Activated CD4-positive, alpha-beta T cell treated with anti-CD3 and anti-CD28 coated beads for 36 hours (primary cell): ENCODE measurements at regions of chrX and their contacts with region 1.

Region 1: GRCh38 chrX:46796574-46797191 is 37.8 kb upstream of the SLC9A7 start:
- DNase-seq: peak; percentile 84
- ATAC-seq: peak; percentile 63
- H3K4me3 Mint-ChIP-seq: no peak overlapping the region
- H3K27ac Mint-ChIP-seq: no peak overlapping the region
- H3K4me1 Mint-ChIP-seq: peaks cover 19% of the 10 kb centered on the region
- H3K27me3 Mint-ChIP-seq: peaks cover 2% of the 10 kb centered on the region

Region 2: GRCh38 chrX:45781901-45782553 is 1014.7 kb before region 1 on chrX:
- CTCF ChIA-PET with region 1: no interaction called
- POLR2A ChIA-PET with region 1: no interaction called
- intact Hi-C with region 1: no loop called
- DNase-seq: no peak
- ATAC-seq: peak; percentile 75
- H3K4me3 Mint-ChIP-seq: no peak overlapping the region
- H3K27ac Mint-ChIP-seq: no peak overlapping the region
- H3K4me1 Mint-ChIP-seq: peaks cover 73% of the 10 kb centered on the region
- H3K27me3 Mint-ChIP-seq: no peaks in the 10 kb centered on the region

Region 3: GRCh38 chrX:46381630-46382029 is 415.1 kb before region 1 on chrX:
- CTCF ChIA-PET with region 1: no interaction called
- POLR2A ChIA-PET with region 1: no interaction called
- intact Hi-C with region 1: loop called (anchors 2 to 10 kb)
- DNase-seq: peak; percentile 56
- ATAC-seq: peak; percentile 61
- H3K4me3 Mint-ChIP-seq: no peak overlapping the region
- H3K27ac Mint-ChIP-seq: no peak overlapping the region
- H3K4me1 Mint-ChIP-seq: no peaks in the 10 kb centered on the region
- H3K27me3 Mint-ChIP-seq: no peaks in the 10 kb centered on the region

Region 4: GRCh38 chrX:46545111-46546005 is 251.3 kb before region 1 on chrX and contains the start of gene ZNF674:
- CTCF ChIA-PET with region 1: no interaction called
- POLR2A ChIA-PET with region 1: no interaction called
- intact Hi-C with region 1: loop called in 1 of 2 experiments (anchors 10 kb)
- DNase-seq: peak; percentile 96
- ATAC-seq: peak; percentile 88
- H3K4me3 Mint-ChIP-seq: peak within 1 kb of the TSS; percentile 88
- H3K27ac Mint-ChIP-seq: peak within 1 kb of the TSS; percentile 94
- H3K4me1 Mint-ChIP-seq: peaks cover 32% of the 10 kb centered on the region
- H3K27me3 Mint-ChIP-seq: no peaks in the 10 kb centered on the region
- total RNA-seq, gene ZNF674: 2.0 to 2.6 TPM

Region 5: DNA sequence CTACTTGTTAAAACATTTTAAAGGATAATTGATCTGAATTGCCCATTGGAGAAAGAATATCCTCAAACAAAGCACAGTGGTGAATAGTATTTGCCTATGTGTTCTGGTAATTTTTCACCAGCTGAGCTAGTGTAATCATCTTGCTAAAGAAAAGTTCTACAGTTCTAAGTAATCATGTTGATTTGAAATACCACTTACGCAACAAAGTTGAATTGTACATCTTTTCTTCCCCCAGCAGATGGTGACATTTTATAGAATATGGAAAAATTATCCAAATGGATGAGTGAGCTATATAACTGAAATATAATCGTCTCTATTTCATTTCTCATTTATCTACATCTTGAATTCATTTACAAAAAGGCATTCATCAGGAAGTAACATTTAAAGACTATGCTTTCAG is 241.7 kb before region 1 on chrX:
- CTCF ChIA-PET with region 1: interaction called, 3 read pairs
- POLR2A ChIA-PET with region 1: no interaction called
- intact Hi-C with region 1: loop called in 1 of 2 experiments (anchors 1 kb)
- DNase-seq: no peak
- ATAC-seq: no peak
- H3K4me3 Mint-ChIP-seq: no peak overlapping the region
- H3K27ac Mint-ChIP-seq: no peak overlapping the region
- H3K4me1 Mint-ChIP-seq: no peaks in the 10 kb centered on the region
- H3K27me3 Mint-ChIP-seq: no peaks in the 10 kb centered on the region

Region 6: GRCh38 chrX:46642145-46642544 is 154.5 kb before region 1 on chrX:
- CTCF ChIA-PET with region 1: no interaction called
- POLR2A ChIA-PET with region 1: no interaction called
- intact Hi-C with region 1: loop called in 1 of 2 experiments (anchors 10 kb)
- DNase-seq: peak; percentile 14
- ATAC-seq: peak; percentile 83
- H3K4me3 Mint-ChIP-seq: no peak overlapping the region
- H3K27ac Mint-ChIP-seq: no peak overlapping the region
- H3K4me1 Mint-ChIP-seq: peaks cover 16% of the 10 kb centered on the region
- H3K27me3 Mint-ChIP-seq: no peaks in the 10 kb centered on the region

Region 7: DNA sequence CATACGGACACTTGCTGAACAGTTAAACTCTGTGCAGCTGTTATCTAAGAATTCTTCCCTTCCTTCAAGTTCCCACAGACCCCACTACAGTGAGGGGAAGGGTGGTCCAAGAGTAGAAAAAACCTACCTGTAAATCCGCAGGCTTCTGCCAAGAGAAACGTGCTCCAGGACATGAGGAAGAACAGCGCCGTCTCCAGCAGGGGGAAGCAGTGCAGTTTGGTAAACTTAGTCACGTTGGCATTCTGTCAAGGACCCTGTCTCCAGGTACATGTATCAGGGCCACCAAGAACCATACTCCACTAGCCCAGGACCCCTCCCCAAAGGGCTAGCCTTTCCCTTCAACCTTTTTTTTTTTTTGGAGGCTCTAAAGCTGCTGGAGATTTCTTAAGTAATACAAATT is 143.2 kb before region 1 on chrX:
- CTCF ChIA-PET with region 1: no interaction called
- POLR2A ChIA-PET with region 1: no interaction called
- intact Hi-C with region 1: loop called (anchors 5 to 10 kb)
- DNase-seq: peak; percentile 36
- ATAC-seq: no peak
- H3K4me3 Mint-ChIP-seq: no peak overlapping the region
- H3K27ac Mint-ChIP-seq: no peak overlapping the region
- H3K4me1 Mint-ChIP-seq: peaks cover 5% of the 10 kb centered on the region
- H3K27me3 Mint-ChIP-seq: no peaks in the 10 kb centered on the region

Region 8: GRCh38 chrX:46713672-46714490 is 82.8 kb before region 1 on chrX:
- CTCF ChIA-PET with region 1: no interaction called
- POLR2A ChIA-PET with region 1: no interaction called
- intact Hi-C with region 1: loop called in 1 of 2 experiments (anchors 5 kb)
- DNase-seq: no peak
- ATAC-seq: peak; percentile 38
- H3K4me3 Mint-ChIP-seq: no peak overlapping the region
- H3K27ac Mint-ChIP-seq: peak overlapping the region; percentile 82
- H3K4me1 Mint-ChIP-seq: peaks cover 67% of the 10 kb centered on the region
- H3K27me3 Mint-ChIP-seq: no peaks in the 10 kb centered on the region